ENCODE measurements at regions of chr6 and their contacts with region 1.

Region 1: DNA sequence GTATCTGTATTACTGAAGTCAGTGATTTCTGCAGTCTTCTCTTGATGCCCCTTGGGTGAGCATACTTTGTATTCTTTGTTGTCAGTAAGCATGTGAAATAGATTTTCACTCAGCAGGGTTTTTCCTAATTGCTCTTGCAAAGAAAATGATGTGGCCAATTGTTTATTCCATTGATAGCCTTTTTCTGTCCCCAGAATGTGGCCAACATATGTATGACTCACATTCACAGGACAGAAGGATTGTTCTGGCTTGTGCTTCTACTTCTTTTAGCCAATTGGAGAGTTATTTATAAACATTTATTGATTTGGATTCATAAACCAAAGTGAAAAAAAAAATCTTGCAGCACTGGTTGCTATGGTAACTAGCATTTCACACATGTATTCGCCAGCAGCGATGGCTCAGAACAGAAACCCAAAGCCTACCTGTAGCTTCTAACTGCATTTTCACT is 54.4 kb upstream of the RBM24 start:
- DNase-seq: no peak
- H3K4me3 ChIP-seq: no peak overlapping the region
- CTCF ChIP-seq: no peak

Region 2: GRCh38 chr6:17150096-17150495 is 76.7 kb before region 1 on chr6:
- in situ Hi-C with region 1: loop called (anchors 5 kb)
- DNase-seq: no peak
- H3K4me3 ChIP-seq: no peak overlapping the region
- CTCF ChIP-seq: no peak

Region 3: DNA sequence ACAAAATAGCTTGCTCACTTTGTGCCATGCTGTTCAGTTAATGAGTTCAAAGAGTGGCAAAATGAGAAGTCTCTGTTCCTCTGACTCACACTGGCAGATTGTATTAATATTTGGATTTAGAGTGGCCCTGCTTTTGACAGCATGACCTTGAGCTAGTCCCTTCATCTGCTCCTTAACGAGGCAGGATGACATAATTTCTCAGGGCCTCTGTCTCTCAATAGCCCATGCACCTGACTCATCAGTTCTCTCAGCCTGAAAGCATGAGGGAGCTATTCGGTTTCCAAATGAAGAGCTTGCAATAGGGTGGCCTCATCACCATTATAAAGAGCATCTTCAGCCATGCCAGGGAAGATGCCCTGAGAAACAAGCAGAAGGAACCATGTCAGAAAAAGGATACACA is 204.8 kb after region 1 on chr6:
- in situ Hi-C with region 1: no loop called
- DNase-seq: no peak
- H3K4me3 ChIP-seq: no peak overlapping the region
- CTCF ChIP-seq: no peak